ENCODE measurements at regions of chr12 and their contacts with region 1.

Region 1: GRCh38 chr12:131894313-131894860 is at the start of gene ULK1:
- DNase-seq: peak; percentile 84 to 92
- ATAC-seq: peak; percentile 38 to 43
- H3K4me3 ChIP-seq: peak within 1 kb of the TSS; percentile 66 to 91 (median 83)
- H3K27ac ChIP-seq: peak within 1 kb of the TSS; percentile 94 to 100 (median 98)
- H3K4me1 ChIP-seq: peaks cover 20 to 24% of the 10 kb centered on the region in 2 donors
- H3K27me3 ChIP-seq: no peaks in the 10 kb centered on the region
- CTCF ChIP-seq: no peak
- POLR2A ChIP-seq: peak; percentile 97 to 98
- total RNA-seq, gene ULK1: 27.9 to 81.2 (median 48.6) TPM

Region 2: GRCh38 chr12:131710464-131711457 is 183.6 kb before region 1 on chr12 and contains the start of gene SFSWAP:
- in situ Hi-C with region 1: no loop called
- intact Hi-C with region 1: loop called (anchors 2 kb)
- DNase-seq: peak; percentile 46 to 50
- ATAC-seq: peak; percentile 93 to 95
- H3K4me3 ChIP-seq: peak within 1 kb of the TSS; percentile 80 to 99 (median 97)
- H3K27ac ChIP-seq: peak within 1 kb of the TSS; percentile 87 to 97 (median 90)
- H3K4me1 ChIP-seq: peaks cover 23 to 24% of the 10 kb centered on the region in 2 donors
- H3K27me3 ChIP-seq: no peaks in the 10 kb centered on the region
- CTCF ChIP-seq: peak in 1 of 5 experiments; percentile 13
- POLR2A ChIP-seq: peak; percentile 52 to 75
- total RNA-seq, gene SFSWAP: 18.0 to 29.7 (median 25.4) TPM

Region 3: GRCh38 chr12:131928711-131929580 is 34.6 kb after region 1 on chr12 and contains the start of gene PUS1:
- in situ Hi-C with region 1: no loop called
- intact Hi-C with region 1: loop called (anchors 1 kb)
- DNase-seq: peak; percentile 92 to 94
- ATAC-seq: peak; percentile 85 to 89
- H3K4me3 ChIP-seq: peak within 1 kb of the TSS; percentile 93 to 100 (median 96)
- H3K27ac ChIP-seq: peak within 1 kb of the TSS; percentile 80 to 93 (median 92)
- H3K4me1 ChIP-seq: peaks cover 10 to 11% of the 10 kb centered on the region in 2 donors
- H3K27me3 ChIP-seq: no peaks in the 10 kb centered on the region
- CTCF ChIP-seq: no peak
- POLR2A ChIP-seq: peak; percentile 66 to 80
- total RNA-seq, gene PUS1: 10.4 to 29.0 (median 12.2) TPM

Region 4: GRCh38 chr12:132083941-132084620 is 189.7 kb after region 1 on chr12:
- in situ Hi-C with region 1: no loop called
- intact Hi-C with region 1: loop called (anchors 1 kb)
- DNase-seq: peak; percentile 90
- ATAC-seq: peak; percentile 87 to 92
- H3K4me3 ChIP-seq: peak overlapping the region; percentile 72 to 98 (median 87)
- H3K27ac ChIP-seq: peak overlapping the region; percentile 93 to 97 (median 94)
- H3K4me1 ChIP-seq: peaks cover 17 to 22% of the 10 kb centered on the region in 2 donors
- H3K27me3 ChIP-seq: no peaks in the 10 kb centered on the region
- CTCF ChIP-seq: peak in 1 of 5 experiments; percentile 5
- POLR2A ChIP-seq: peak; percentile 94 to 96

Region 5: GRCh38 chr12:132489602-132490239 is 595.3 kb after region 1 on chr12 and contains the start of gene FBRSL1:
- in situ Hi-C with region 1: no loop called
- intact Hi-C with region 1: loop called (anchors 2 kb)
- DNase-seq: peak; percentile 78 to 84
- ATAC-seq: peak; percentile 77 to 84
- H3K4me3 ChIP-seq: peak within 1 kb of the TSS; percentile 62 to 92 (median 80)
- H3K27ac ChIP-seq: peak within 1 kb of the TSS; percentile 73 to 81 (median 78)
- H3K4me1 ChIP-seq: peaks cover 29 to 39% of the 10 kb centered on the region in 2 donors
- H3K27me3 ChIP-seq: no peaks in the 10 kb centered on the region
- CTCF ChIP-seq: no peak
- POLR2A ChIP-seq: peak; percentile 48 to 53
- total RNA-seq, gene FBRSL1: 8.4 to 29.4 (median 22.8) TPM